Activated T-helper 2 cell treated with anti-CD3 and anti-CD28 coated beads, Interferon-gamma antibody, Interleukin-2, Interleukin-4, amounts not matched to agents 10 μg/mL and 5 μg/mL and 100 μg/mL, durations not matched to agents 14 hours and 24 hours and 36 hours (primary cell): ENCODE measurements at regions of chr6 and their contacts with region 1.

Region 1: DNA sequence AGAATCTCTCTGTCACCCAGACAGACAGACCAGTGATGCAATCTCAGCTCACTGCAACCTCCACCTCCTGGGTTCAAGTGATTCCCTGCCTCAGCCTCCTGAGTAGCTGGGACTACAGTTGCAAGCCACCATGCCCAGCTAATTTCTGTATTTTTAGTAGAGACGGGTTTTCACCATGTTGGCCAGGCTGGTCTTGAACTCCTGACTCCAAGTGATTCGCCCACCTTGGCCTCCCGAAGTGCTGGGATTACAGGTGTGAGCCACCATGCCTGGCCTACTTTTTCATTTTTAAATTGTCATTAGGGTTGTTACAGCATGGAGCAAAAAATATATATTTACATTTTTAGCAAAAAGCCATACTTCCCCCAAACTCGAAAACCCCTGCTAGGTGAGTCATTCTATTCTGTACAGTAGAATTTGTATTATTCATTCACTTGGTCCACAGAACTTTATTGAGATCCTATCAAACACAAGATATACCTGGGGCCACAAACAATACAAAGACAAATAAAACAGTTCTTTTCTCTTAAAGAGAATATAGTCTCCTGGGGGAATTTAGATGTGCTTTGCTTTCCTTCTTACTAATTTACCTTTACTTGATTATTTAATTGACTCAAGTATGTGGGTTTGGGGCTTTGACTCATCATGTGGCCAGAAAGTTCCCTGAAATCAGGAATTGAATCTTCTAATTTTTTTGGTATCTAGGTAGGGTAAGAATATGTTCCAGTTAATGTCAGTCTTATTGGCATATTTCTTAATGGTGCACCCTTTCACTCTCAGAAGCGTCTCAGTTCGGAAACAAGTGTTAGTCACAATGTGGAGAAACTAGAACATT is 16.6 kb upstream of the CCND3 start:
- DNase-seq: no peak
- H3K4me3 Mint-ChIP-seq: peak overlapping the region; percentile 5
- H3K27ac Mint-ChIP-seq: peak overlapping the region; percentile 85
- H3K4me1 Mint-ChIP-seq: peaks cover 33% of the 10 kb centered on the region
- H3K27me3 Mint-ChIP-seq: no peaks in the 10 kb centered on the region

Region 2: DNA sequence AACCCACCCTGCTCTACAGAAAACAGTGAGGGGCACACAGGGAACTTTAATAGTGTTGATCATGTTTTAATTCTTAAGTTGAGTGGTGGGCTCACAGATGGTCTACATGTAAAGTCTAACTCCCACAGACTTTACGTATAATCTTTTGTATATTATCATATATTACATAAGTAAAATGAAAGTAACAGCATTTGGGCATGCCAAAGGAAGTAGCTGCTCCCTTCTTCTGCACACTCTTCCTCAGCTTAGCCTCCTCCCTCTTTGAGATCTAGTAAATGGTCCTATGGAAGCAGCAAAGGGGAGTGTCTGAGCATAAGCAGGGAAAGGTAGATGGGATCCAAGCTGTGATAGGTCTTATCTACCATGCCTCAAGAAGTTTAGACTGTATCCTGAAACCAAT is 48.5 kb before region 1 on chr6:
- intact Hi-C with region 1: no loop called
- DNase-seq: no peak
- H3K4me3 Mint-ChIP-seq: no peak overlapping the region
- H3K27ac Mint-ChIP-seq: no peak overlapping the region
- H3K4me1 Mint-ChIP-seq: peaks cover 8% of the 10 kb centered on the region
- H3K27me3 Mint-ChIP-seq: no peaks in the 10 kb centered on the region

Region 3: GRCh38 chr6:41970436-41970846 is 12.2 kb after region 1 on chr6:
- intact Hi-C with region 1: loop called (anchors 1 kb)
- DNase-seq: no peak
- H3K4me3 Mint-ChIP-seq: peak overlapping the region; percentile 14
- H3K27ac Mint-ChIP-seq: peak overlapping the region; percentile 93
- H3K4me1 Mint-ChIP-seq: peaks cover 29% of the 10 kb centered on the region
- H3K27me3 Mint-ChIP-seq: no peaks in the 10 kb centered on the region

Region 4: DNA sequence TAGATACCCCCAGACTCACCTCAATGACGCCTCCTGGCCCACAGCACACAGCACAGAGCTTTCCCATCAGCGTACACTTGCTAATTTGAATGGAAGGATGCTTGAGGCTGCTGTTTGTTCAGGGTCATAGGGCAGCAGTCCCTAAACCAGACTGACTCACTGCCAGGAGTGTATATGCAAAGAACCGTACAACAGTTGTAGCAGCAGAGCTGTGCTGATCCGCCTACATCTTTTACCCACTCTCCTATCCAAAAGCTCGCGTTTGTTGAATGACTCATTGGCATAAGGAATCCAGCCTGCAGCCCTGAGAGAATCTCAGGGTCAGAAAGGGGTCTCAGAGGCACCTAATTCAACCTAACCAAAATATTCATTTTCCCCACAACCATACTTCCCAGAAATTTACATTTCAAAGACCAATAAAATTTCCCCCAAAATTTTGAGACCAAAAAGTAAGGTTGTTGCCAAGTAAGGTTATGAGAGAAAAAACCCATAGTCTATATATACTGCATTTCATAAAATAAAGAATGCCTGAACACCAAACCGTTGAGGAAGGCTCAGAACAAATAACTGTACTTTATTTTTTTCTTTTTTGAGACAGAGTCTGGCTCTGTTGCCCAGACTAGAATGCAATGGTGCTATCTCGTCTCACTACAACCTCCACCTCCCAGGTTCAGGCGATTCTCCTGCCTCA is 18.7 kb after region 1 on chr6:
- intact Hi-C with region 1: loop called (anchors 1 kb)
- DNase-seq: no peak
- H3K4me3 Mint-ChIP-seq: no peak overlapping the region
- H3K27ac Mint-ChIP-seq: peak overlapping the region; percentile 79
- H3K4me1 Mint-ChIP-seq: peaks cover 33% of the 10 kb centered on the region
- H3K27me3 Mint-ChIP-seq: no peaks in the 10 kb centered on the region

Region 5: GRCh38 chr6:42021847-42022754 is 63.9 kb after region 1 on chr6:
- intact Hi-C with region 1: loop called (anchors 2 kb)
- DNase-seq: peak; percentile 68
- H3K4me3 Mint-ChIP-seq: peak overlapping the region; percentile 64
- H3K27ac Mint-ChIP-seq: peak overlapping the region; percentile 96
- H3K4me1 Mint-ChIP-seq: peaks cover 58% of the 10 kb centered on the region
- H3K27me3 Mint-ChIP-seq: no peaks in the 10 kb centered on the region

Region 6: GRCh38 chr6:42038811-42039408 is 80.7 kb after region 1 on chr6:
- intact Hi-C with region 1: loop called (anchors 1 kb)
- DNase-seq: no peak
- H3K4me3 Mint-ChIP-seq: peak overlapping the region; percentile 64
- H3K27ac Mint-ChIP-seq: peak overlapping the region; percentile 93
- H3K4me1 Mint-ChIP-seq: peaks cover 59% of the 10 kb centered on the region
- H3K27me3 Mint-ChIP-seq: no peaks in the 10 kb centered on the region